GM12878 (cell line): ENCODE measurements at regions of chr12 and their contacts with region 1.

Region 1: DNA sequence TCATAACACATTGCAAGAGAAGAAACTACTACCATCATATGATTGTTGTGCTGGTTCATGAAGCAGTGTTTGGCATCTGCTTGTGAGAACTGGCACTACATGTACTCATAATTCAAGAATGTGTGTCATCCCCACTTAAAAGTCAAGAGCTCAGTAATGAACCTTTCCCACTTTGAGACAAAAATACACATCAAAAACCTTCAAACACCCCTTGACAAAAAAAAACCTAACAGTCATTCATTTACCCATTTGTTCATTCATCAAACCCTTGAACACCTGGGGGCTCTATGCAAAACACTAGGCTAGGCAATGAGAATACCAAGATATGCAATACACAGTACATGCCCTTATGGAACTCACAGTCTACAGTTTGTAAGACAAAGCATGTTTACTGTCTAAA is 40.0 kb downstream of the KIF21A start:
- DNase-seq: peak; percentile 32
- ATAC-seq: peak; percentile 78
- H3K4me3 ChIP-seq: no peak overlapping the region
- H3K27ac ChIP-seq: no peak overlapping the region
- H3K4me1 ChIP-seq: peaks cover 6% of the 10 kb centered on the region
- H3K27me3 ChIP-seq: no peaks in the 10 kb centered on the region
- CTCF ChIP-seq: no peak
- EP300 ChIP-seq: no peak
- POLR2A ChIP-seq: no peak
- RAD21 ChIP-seq: no peak

Region 2: GRCh38 chr12:39287817-39288216 is 115.1 kb before region 1 on chr12:
- CTCF ChIA-PET with region 1: no interaction called
- POLR2A ChIA-PET with region 1: no interaction called
- RAD21 ChIA-PET with region 1: no interaction called
- SMC1A ChIA-PET with region 1: no interaction called
- in situ Hi-C with region 1: no loop called
- intact Hi-C with region 1: no loop called
- DNase-seq: no peak
- ATAC-seq: no peak
- H3K4me3 ChIP-seq: no peak overlapping the region
- H3K27ac ChIP-seq: no peak overlapping the region
- H3K4me1 ChIP-seq: no peaks in the 10 kb centered on the region
- H3K27me3 ChIP-seq: no peaks in the 10 kb centered on the region
- CTCF ChIP-seq: no peak
- EP300 ChIP-seq: no peak
- POLR2A ChIP-seq: no peak
- RAD21 ChIP-seq: no peak

Region 3: DNA sequence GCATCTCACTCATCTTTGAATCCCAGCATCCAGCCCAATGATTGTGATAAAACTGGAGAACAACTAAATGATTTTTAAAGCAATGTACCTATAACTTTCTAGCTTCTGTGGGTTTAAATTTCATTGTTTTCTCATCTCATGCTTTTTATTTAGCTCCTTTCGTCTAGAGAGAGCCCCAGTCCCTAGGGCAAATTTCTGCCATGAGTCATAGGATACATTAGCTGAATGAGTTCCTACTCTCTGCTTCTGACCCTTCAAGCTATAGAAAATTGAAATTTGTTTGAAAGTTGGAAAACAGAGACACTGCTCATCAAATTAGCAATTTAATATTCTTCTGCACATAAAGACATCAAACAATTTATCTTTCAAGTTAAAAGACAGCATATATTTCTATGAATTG is 73.9 kb before region 1 on chr12:
- CTCF ChIA-PET with region 1: no interaction called
- POLR2A ChIA-PET with region 1: no interaction called
- RAD21 ChIA-PET with region 1: no interaction called
- SMC1A ChIA-PET with region 1: no interaction called
- in situ Hi-C with region 1: no loop called
- intact Hi-C with region 1: no loop called
- DNase-seq: no peak
- ATAC-seq: no peak
- H3K4me3 ChIP-seq: no peak overlapping the region
- H3K27ac ChIP-seq: no peak overlapping the region
- H3K4me1 ChIP-seq: no peaks in the 10 kb centered on the region
- H3K27me3 ChIP-seq: no peaks in the 10 kb centered on the region
- CTCF ChIP-seq: no peak
- EP300 ChIP-seq: no peak
- POLR2A ChIP-seq: no peak
- RAD21 ChIP-seq: no peak

Region 4: GRCh38 chr12:39435531-39435930 is 32.6 kb after region 1 on chr12:
- CTCF ChIA-PET with region 1: interaction called, 4 read pairs
- POLR2A ChIA-PET with region 1: interaction called, 3 read pairs
- RAD21 ChIA-PET with region 1: interaction called, 9 read pairs
- SMC1A ChIA-PET with region 1: interaction called, 33 read pairs
- in situ Hi-C with region 1: no loop called
- intact Hi-C with region 1: loop called (anchors 2 kb)
- DNase-seq: no peak
- ATAC-seq: no peak
- H3K4me3 ChIP-seq: no peak overlapping the region
- H3K27ac ChIP-seq: no peak overlapping the region
- H3K4me1 ChIP-seq: no peaks in the 10 kb centered on the region
- H3K27me3 ChIP-seq: no peaks in the 10 kb centered on the region
- CTCF ChIP-seq: no peak
- EP300 ChIP-seq: no peak
- POLR2A ChIP-seq: no peak
- RAD21 ChIP-seq: no peak